Endothelial cell of umbilical vein (primary cell): ENCODE measurements at regions of chr17 and their contacts with region 1.

Region 1: DNA sequence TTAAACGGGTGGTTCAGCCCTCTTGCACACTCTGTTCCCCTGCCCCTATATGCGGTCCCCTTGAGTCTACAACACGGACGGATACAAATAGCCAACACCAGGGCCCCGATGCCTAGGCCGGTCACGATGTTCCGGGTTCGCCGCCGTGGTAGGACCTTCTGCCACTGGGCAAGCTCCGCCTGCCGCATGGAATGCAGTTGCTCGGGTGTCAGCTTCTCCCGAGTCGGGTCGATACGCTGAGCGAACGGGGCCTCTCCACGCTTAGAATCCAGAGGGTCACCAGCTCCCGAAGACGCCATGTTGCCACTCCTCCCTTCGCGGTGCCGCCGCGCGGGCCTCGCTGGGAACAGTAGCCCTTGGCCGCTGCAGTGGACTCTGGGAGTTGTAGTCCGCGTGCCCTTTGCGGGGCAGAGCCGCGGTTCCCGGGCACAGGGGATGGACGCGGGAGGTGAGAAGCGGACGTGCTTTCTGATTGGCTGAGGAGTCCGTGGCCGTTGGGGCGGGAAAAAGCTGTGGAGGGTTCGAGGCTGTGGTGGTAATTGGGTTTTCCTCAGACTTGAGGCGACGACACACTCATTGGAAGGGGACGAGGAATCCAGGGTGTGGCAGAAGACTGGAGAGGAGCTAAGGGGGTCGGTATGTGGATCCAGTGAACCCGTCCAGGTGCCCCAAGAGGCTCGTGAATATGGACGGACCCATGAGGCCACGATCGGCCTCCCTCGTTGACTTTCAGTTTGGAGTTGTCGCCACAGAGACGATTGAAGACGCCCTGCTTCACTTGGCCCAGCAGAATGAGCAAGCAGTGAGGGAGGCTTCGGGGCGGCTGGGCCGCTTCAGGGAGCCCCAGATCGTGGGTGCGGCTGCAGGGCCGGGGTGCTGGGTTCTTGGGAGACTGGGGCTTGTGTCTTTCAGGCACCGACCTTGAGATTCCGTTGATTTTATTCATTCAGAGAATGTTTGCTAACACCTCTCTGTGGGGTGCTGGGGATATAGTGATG is at the starts of genes CNTD1 and COA3:
- DNase-seq: peak; percentile 89
- H3K4me3 ChIP-seq: peak within 1 kb of the TSS; percentile 16 to 76 (median 71)
- H3K27ac ChIP-seq: no peak within 1 kb of the TSS
- H3K4me1 ChIP-seq: peaks cover 11% of the 10 kb centered on the region
- H3K27me3 ChIP-seq: no peaks in the 10 kb centered on the region
- CTCF ChIP-seq: no peak
- POLR2A ChIP-seq: peak; percentile 84
- total RNA-seq, gene CNTD1: not detected in 2 replicates
- total RNA-seq, gene COA3: 56.6 and 57.5 TPM in 2 replicates

Region 2: GRCh38 chr17:42744806-42745617 is 53.7 kb before region 1 on chr17 and contains the start of gene EZH1:
- CTCF ChIA-PET with region 1: no interaction called
- POLR2A ChIA-PET with region 1: no interaction called
- dilution Hi-C with region 1: no loop called
- intact Hi-C with region 1: loop called (anchors 2 kb)
- DNase-seq: peak; percentile 96
- H3K4me3 ChIP-seq: peak within 1 kb of the TSS; percentile 43 to 72 (median 53)
- H3K27ac ChIP-seq: peak within 1 kb of the TSS; percentile 65
- H3K4me1 ChIP-seq: peaks cover 10% of the 10 kb centered on the region
- H3K27me3 ChIP-seq: no peaks in the 10 kb centered on the region
- CTCF ChIP-seq: no peak
- POLR2A ChIP-seq: peak; percentile 58
- total RNA-seq, gene EZH1: 29.8 and 31.4 TPM in 2 replicates

Region 3: GRCh38 chr17:42773290-42774035 is 25.2 kb before region 1 on chr17 and contains the start of gene VPS25:
- CTCF ChIA-PET with region 1: interaction called, 4 read pairs
- POLR2A ChIA-PET with region 1: no interaction called
- dilution Hi-C with region 1: no loop called
- intact Hi-C with region 1: loop called (anchors 1 kb)
- DNase-seq: peak; percentile 61
- H3K4me3 ChIP-seq: peak within 1 kb of the TSS; percentile 15 to 71 (median 68)
- H3K27ac ChIP-seq: peak within 1 kb of the TSS; percentile 73
- H3K4me1 ChIP-seq: peaks cover 26% of the 10 kb centered on the region
- H3K27me3 ChIP-seq: no peaks in the 10 kb centered on the region
- CTCF ChIP-seq: peak in 1 of 2 donors; percentile 3
- POLR2A ChIP-seq: peak; percentile 93
- total RNA-seq, gene VPS25: 45.0 and 47.1 TPM in 2 replicates

Region 4: DNA sequence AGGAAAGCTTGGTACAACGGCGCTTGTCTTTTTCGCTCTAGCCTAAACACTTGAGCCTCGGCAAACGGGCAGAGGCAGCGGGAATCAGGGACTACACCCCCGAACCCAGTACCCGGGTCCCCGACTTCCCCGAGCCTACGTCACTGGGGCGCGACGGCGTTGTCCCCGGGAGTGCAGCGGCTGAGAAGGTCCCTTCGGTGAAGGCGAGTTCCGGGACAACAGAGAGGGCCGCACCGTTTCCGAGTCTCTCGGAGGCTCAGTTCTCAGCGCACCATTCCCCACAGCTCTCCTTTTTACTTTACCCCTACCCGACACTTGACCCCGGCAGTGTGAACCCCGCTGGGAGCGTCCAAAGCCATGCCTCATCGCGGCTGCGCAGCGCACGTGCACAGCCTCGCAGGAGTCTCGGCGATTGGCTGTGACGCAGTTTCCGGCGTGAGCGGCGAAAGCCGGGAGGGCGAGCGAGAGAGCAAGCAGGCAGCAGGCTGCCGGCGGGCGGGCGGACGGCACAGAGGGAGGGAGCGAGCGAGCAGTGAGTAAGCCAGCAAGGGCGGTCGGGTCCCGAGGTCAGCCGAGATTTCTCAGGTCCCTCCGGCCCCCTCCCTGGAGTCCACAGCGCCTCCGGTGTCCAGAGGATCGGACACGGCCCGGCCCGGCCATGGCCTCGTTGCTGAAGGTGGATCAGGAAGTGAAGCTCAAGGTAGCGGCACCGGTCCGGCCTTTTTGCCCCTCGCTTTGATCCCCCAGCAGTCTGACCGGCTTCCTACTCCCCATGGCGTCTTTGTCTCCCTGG is 34.5 kb after region 1 on chr17 and contains the start of gene PSME3:
- CTCF ChIA-PET with region 1: no interaction called
- POLR2A ChIA-PET with region 1: no interaction called
- dilution Hi-C with region 1: no loop called
- intact Hi-C with region 1: loop called (anchors 1 kb)
- DNase-seq: peak; percentile 91
- H3K4me3 ChIP-seq: peak within 1 kb of the TSS; percentile 58 to 81 (median 80)
- H3K27ac ChIP-seq: peak within 1 kb of the TSS; percentile 71
- H3K4me1 ChIP-seq: peaks cover 17% of the 10 kb centered on the region
- H3K27me3 ChIP-seq: peaks cover 0 to 4% of the 10 kb centered on the region in 2 experiments
- CTCF ChIP-seq: no peak
- POLR2A ChIP-seq: peak; percentile 91
- total RNA-seq, gene PSME3: 126 and 133 TPM in 2 replicates